ENCODE measurements at regions of chrX and their contacts with region 1.

Region 1: GRCh38 chrX:140141444-140142029 is 176.2 kb upstream of the CXorf66 start:
- DNase-seq: peak in 1 of 3 donors; percentile 42
- ATAC-seq: peak; percentile 67 to 78 (median 74)
- H3K4me3 ChIP-seq: no peak overlapping the region
- H3K27ac ChIP-seq: no peak overlapping the region
- H3K4me1 ChIP-seq: no peaks in the 10 kb centered on the region
- H3K27me3 ChIP-seq: peaks cover 0 to 14% of the 10 kb centered on the region in 2 donors
- CTCF ChIP-seq: peak; percentile 64 to 77 (median 70)
- POLR2A ChIP-seq: no peak

Region 2: DNA sequence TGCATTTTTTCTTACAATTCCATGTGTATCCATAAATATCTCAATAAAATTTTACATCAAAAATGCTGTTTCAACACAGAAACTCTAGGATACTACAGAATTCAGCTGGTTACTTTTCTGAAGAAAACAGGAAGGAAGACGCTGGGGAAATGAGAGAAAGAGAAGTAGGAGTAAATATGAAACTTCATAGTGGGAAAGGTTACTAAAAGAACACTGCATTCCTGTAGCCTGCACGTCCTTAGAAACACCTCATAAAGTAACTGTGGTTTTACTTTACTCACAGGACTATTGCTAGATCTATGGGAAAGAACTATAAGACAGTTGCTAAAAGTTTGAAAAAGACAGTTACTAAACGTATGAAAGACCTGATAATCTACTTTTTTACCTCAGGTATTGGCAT is 231.8 kb before region 1 on chrX:
- intact Hi-C with region 1: no loop called
- DNase-seq: no peak
- ATAC-seq: peak in 1 of 4 donors; percentile 48
- H3K4me3 ChIP-seq: no peak overlapping the region
- H3K27ac ChIP-seq: no peak overlapping the region
- H3K4me1 ChIP-seq: peaks cover 0 to 14% (median 0%) of the 10 kb centered on the region in 4 donors
- H3K27me3 ChIP-seq: no peaks in the 10 kb centered on the region
- CTCF ChIP-seq: no peak
- POLR2A ChIP-seq: no peak

Region 3: DNA sequence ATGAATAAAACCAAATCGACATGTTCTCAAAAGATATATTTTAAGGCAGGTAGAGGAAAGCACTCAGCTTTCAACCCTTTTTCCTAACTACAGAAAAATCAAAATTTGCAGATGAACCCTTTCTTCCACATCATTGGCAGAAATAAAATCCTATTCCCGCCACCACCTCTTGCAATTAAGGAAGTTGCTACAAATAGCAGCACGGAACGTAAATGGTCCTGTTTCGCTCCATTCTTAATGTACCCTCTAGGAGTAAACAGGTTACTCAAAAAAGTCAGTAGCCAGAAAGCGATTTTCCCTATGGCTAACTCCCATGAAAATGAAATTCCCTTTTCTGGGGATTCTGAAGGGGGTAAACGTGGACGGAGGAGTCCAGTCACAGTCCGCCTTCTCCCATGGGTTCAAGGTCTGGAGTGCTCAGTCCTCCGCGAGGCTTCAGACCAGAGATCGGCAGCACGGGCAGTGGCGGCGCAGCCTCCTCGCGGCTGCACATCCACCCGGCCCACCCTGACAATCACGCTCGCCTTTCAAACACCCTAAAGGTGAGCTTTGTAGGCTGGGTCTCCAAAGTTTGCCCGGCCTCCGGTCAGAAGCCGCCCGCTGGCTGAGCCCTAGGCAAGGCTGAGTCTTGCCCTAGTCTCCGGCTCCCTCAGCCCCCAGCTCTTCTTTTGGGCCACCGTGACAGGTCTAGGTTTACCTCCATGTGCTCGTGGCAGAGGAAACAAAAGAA is 210.5 kb before region 1 on chrX:
- intact Hi-C with region 1: no loop called
- DNase-seq: peak; percentile 35 to 64 (median 50)
- ATAC-seq: peak; percentile 13 to 43 (median 22)
- H3K4me3 ChIP-seq: peak overlapping the region; percentile 69 to 77 (median 74)
- H3K27ac ChIP-seq: peak overlapping the region; percentile 45 to 85 (median 53)
- H3K4me1 ChIP-seq: peaks cover 0 to 4% (median 0%) of the 10 kb centered on the region in 4 donors
- H3K27me3 ChIP-seq: no peaks in the 10 kb centered on the region
- CTCF ChIP-seq: no peak
- POLR2A ChIP-seq: no peak

Region 4: DNA sequence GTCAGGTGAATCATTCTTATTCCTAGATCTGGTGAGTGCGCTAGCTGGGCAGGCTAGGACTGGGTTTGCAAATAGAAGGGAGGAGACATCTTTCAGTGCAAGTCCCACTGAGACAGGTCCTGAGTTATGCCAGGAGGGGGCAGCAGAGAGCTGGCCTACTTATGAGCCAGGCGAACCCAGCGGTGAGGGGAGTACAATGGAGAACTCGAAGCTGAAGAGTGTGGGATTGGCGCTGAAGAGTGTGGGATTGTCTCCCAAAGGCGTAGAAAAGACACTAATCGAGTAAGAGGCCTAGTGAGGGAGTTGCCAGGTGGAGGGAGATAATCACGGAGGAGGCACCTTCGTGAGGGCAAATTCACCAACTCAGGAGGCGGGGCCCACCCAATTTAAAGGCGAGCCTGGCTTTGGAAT is 84.5 kb before region 1 on chrX:
- intact Hi-C with region 1: loop called in 1 of 2 experiments (anchors 5 kb)
- DNase-seq: peak; percentile 74 to 77 (median 75)
- ATAC-seq: peak; percentile 98 to 100 (median 100)
- H3K4me3 ChIP-seq: no peak overlapping the region
- H3K27ac ChIP-seq: no peak overlapping the region
- H3K4me1 ChIP-seq: no peaks in the 10 kb centered on the region
- H3K27me3 ChIP-seq: no peaks in the 10 kb centered on the region
- CTCF ChIP-seq: peak; percentile 75 to 98 (median 88)
- POLR2A ChIP-seq: no peak

Region 5: GRCh38 chrX:140298960-140299825 is 157.7 kb after region 1 on chrX:
- intact Hi-C with region 1: no loop called
- DNase-seq: no peak
- ATAC-seq: no peak
- H3K4me3 ChIP-seq: no peak overlapping the region
- H3K27ac ChIP-seq: no peak overlapping the region
- H3K4me1 ChIP-seq: no peaks in the 10 kb centered on the region
- H3K27me3 ChIP-seq: no peaks in the 10 kb centered on the region
- CTCF ChIP-seq: no peak
- POLR2A ChIP-seq: no peak

Region 6: DNA sequence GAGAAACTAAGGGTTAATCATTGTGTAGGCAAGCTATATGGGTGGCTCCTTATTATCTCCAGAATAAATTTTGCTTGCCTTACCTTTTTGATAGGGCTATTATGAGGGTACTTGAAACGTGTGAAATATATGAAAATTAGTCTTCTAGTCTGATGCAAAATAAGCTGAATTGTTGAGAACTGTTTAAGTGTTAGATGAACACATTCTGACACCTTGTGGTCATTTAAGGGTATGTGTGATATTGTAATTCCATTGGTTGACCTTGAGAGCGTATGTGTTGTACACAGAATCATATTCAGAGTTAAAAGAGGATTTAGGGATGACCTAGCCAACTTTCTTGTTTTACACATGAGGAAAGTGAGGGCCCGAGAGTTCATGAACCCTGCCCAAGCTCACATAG is 523.4 kb after region 1 on chrX:
- intact Hi-C with region 1: no loop called
- DNase-seq: no peak
- ATAC-seq: peak in 3 of 4 donors; percentile 69 to 75 (median 69)
- H3K4me3 ChIP-seq: no peak overlapping the region
- H3K27ac ChIP-seq: no peak overlapping the region
- H3K4me1 ChIP-seq: no peaks in the 10 kb centered on the region
- H3K27me3 ChIP-seq: peaks cover 0 to 18% of the 10 kb centered on the region in 2 donors
- CTCF ChIP-seq: peak; percentile 44 to 52 (median 46)
- POLR2A ChIP-seq: no peak